Head of caudate nucleus (tissue), 42 donors: ENCODE measurements at regions of chr6 and their contacts with region 1.

Region 1: DNA sequence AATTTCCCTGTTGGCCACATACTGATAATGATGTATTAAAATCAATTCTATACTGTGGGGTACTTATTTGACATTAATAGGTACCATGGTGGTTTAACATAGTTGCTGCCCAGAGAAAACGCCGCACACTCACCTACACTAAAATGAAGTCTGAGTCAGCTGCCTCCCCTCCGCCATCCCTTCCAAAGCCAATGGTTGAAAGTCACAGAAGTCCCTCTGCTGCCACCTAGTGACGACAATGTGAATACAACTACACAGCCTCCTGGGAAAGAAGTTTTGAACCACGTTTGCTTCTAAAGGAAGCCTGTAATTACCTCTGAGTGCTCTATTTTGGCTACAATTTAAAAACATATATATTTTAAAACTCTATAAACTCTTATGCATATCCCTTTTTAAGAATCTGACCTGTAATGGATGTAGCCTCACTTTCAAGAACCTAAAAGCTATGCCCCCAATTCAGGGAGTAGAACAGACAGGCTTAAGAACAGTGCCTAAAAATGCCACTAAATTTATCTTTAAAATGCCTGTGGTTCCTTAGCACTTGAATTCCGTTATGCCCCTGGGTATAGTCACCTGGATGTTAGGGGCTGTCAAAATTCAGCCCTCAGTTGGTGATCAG is 20.6 kb upstream of the ECI2 start:
- DNase-seq: peak; percentile 47 to 94 (median 84)

Region 2: GRCh38 chr6:4055420-4056041 is 100.4 kb before region 1 on chr6:
- intact Hi-C with region 1: loop called (anchors 10 kb)
- DNase-seq: peak in 29 of 42 donors; percentile 7 to 75 (median 49)